ENCODE measurements at regions of chrX and their contacts with region 1.

Region 1: GRCh38 chrX:136616987-136617685 is 30.8 kb upstream of the CD40LG start:
- DNase-seq: no peak
- ATAC-seq: peak; percentile 94
- H3K4me3 Mint-ChIP-seq: no peak overlapping the region
- H3K27ac Mint-ChIP-seq: peak overlapping the region; percentile 53
- H3K4me1 Mint-ChIP-seq: peaks cover 7% of the 10 kb centered on the region
- H3K27me3 Mint-ChIP-seq: no peaks in the 10 kb centered on the region
- CTCF ChIP-seq: no peak

Region 2: GRCh38 chrX:136572030-136572429 is 45.1 kb before region 1 on chrX:
- CTCF ChIA-PET with region 1: no interaction called
- POLR2A ChIA-PET with region 1: no interaction called
- intact Hi-C with region 1: no loop called
- DNase-seq: no peak
- ATAC-seq: no peak
- H3K4me3 Mint-ChIP-seq: no peak overlapping the region
- H3K27ac Mint-ChIP-seq: no peak overlapping the region
- H3K4me1 Mint-ChIP-seq: no peaks in the 10 kb centered on the region
- H3K27me3 Mint-ChIP-seq: no peaks in the 10 kb centered on the region
- CTCF ChIP-seq: no peak

Region 3: DNA sequence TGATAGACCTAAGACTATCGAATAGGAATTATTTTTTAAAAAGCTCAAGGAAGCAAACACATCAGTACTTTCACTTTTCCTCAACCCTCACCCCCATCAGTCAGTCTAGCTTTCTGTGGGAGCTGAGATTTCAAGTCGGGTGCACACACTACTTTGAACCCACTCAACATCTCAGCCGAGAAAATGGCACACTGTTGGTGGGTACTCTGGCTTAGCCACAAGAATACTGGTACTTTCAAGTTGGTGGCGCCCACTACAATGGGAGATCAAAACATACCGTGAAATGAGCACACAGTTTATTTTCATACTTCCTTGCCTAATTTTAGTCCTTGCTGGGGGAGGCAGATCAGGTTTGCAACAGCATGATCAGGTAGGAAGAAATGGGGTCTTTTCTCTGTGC is 41.0 kb after region 1 on chrX:
- CTCF ChIA-PET with region 1: no interaction called
- POLR2A ChIA-PET with region 1: no interaction called
- intact Hi-C with region 1: loop called (anchors 5 kb)
- DNase-seq: no peak
- ATAC-seq: no peak
- H3K4me3 Mint-ChIP-seq: peak overlapping the region; percentile 35
- H3K27ac Mint-ChIP-seq: no peak overlapping the region
- H3K4me1 Mint-ChIP-seq: peaks cover 11% of the 10 kb centered on the region
- H3K27me3 Mint-ChIP-seq: no peaks in the 10 kb centered on the region
- CTCF ChIP-seq: no peak

Measured in activated B cell treated with CpG ODN at 0.5 μM for 24 hours (primary cell).